Activated T-helper 2 cell treated with anti-CD3 and anti-CD28 coated beads, Interferon-gamma antibody, Interleukin-2, Interleukin-4, amounts not matched to agents 10 μg/mL and 5 μg/mL and 100 μg/mL, durations not matched to agents 14 hours and 24 hours and 36 hours (primary cell): ENCODE measurements at regions of chr6 and their contacts with region 1.

Region 1: DNA sequence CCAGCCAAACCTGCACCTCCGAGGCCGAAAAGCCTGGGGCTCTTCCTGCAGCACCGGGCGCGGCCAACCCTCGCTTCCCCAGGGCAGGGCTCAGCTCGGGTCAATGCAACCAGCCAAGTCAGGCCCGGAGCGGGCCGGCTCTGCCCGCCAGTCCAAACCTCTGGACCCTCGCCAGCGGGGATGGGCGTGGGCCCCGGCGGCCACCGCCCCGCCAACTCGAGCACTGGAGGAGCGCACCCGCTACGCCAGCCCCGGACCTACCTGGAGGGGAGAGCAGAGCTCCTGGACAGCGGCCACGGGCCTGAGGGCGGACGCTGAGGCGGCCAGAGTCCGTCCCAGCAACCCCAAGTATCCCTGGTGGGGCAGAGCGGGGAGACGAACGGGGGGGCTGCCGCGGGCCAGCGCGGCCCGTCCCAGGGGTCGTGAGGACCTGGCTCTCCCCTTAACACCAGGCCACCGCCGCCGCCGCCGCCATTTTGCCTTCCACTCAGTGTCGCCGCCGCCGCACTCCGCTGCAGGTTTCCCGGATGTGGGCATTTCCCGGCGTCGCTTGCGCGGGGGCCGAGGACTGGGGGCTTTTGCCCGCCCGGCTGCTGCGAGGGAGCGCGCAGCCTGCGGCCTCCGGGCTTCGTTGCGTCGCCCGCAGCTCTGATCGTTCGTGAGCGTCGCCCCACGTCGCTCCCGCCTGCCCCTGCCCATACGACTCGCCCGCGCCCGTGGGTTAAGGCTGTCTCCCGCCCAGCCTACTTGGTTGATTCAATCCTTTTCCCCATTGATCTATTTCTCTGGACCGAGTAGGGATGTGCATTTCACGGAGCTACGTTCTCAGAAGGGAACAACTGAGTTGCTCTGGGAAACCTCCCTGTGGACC is at the start of gene LATS1:
- DNase-seq: peak; percentile 88
- H3K4me3 Mint-ChIP-seq: peak within 1 kb of the TSS; percentile 96
- H3K27ac Mint-ChIP-seq: peak within 1 kb of the TSS; percentile 97
- H3K4me1 Mint-ChIP-seq: peaks cover 31% of the 10 kb centered on the region
- H3K27me3 Mint-ChIP-seq: no peaks in the 10 kb centered on the region
- total RNA-seq, gene LATS1: 27.8 and 28.4 TPM in 2 replicates

Region 2: GRCh38 chr6:149182262-149182661 is 535.6 kb before region 1 on chr6:
- intact Hi-C with region 1: no loop called
- DNase-seq: no peak
- H3K4me3 Mint-ChIP-seq: no peak overlapping the region
- H3K27ac Mint-ChIP-seq: no peak overlapping the region
- H3K4me1 Mint-ChIP-seq: peaks cover 14% of the 10 kb centered on the region
- H3K27me3 Mint-ChIP-seq: no peaks in the 10 kb centered on the region

Region 3: GRCh38 chr6:149686230-149686629 is 31.6 kb before region 1 on chr6:
- intact Hi-C with region 1: loop called (anchors 1 kb)
- DNase-seq: no peak
- H3K4me3 Mint-ChIP-seq: no peak overlapping the region
- H3K27ac Mint-ChIP-seq: peak overlapping the region; percentile 65
- H3K4me1 Mint-ChIP-seq: peaks cover 24% of the 10 kb centered on the region
- H3K27me3 Mint-ChIP-seq: no peaks in the 10 kb centered on the region